Heart right ventricle (tissue), 16 donors: ENCODE measurements at regions of chr14 and their contacts with region 1.

Region 1: GRCh38 chr14:51448831-51449670 is 202.7 kb upstream of the FRMD6 start:
- DNase-seq: peak in 1 of 2 donors; percentile 57
- ATAC-seq: peak; percentile 79 to 98 (median 88)
- H3K4me3 ChIP-seq: no peak overlapping the region
- H3K27ac ChIP-seq: peak overlapping the region in 1 of 10 donors; percentile 12
- H3K4me1 ChIP-seq: peaks cover 5 to 25% (median 12%) of the 10 kb centered on the region in 9 donors
- H3K27me3 ChIP-seq: no peaks in the 10 kb centered on the region
- CTCF ChIP-seq: no peak

Region 2: DNA sequence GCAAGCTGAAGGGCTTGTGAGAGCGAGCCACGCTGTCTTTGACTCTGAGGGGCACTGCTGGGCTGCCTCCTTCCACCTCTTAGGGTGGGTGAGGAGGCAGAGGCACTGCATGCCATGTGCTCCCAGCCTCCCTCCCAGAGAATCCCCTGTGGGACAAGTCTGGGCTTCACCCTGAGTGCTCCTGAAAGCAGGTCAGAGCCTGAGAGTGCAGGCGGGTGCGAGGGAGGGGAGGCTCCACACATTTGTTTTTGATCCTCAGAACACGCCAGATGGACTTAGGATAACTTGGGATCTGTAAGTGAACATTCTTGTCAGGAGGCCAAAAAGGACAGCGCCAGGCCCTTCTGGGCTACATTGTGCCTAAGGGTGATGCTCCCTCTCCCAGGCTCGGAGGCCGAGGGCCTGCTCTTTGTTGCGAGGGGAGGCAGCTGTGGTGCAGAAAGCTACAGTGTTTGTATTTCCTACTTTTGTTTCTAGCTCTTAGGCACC is 53.6 kb before region 1 on chr14:
- intact Hi-C with region 1: loop called in 1 of 10 experiments (anchors 5 kb)
- DNase-seq: peak; percentile 42 to 44
- ATAC-seq: peak; percentile 53 to 80 (median 68)
- H3K4me3 ChIP-seq: no peak overlapping the region
- H3K27ac ChIP-seq: peak overlapping the region; percentile 53 to 91 (median 78)
- H3K4me1 ChIP-seq: peaks cover 8 to 44% (median 32%) of the 10 kb centered on the region in 9 donors
- H3K27me3 ChIP-seq: no peaks in the 10 kb centered on the region
- CTCF ChIP-seq: no peak

Region 3: DNA sequence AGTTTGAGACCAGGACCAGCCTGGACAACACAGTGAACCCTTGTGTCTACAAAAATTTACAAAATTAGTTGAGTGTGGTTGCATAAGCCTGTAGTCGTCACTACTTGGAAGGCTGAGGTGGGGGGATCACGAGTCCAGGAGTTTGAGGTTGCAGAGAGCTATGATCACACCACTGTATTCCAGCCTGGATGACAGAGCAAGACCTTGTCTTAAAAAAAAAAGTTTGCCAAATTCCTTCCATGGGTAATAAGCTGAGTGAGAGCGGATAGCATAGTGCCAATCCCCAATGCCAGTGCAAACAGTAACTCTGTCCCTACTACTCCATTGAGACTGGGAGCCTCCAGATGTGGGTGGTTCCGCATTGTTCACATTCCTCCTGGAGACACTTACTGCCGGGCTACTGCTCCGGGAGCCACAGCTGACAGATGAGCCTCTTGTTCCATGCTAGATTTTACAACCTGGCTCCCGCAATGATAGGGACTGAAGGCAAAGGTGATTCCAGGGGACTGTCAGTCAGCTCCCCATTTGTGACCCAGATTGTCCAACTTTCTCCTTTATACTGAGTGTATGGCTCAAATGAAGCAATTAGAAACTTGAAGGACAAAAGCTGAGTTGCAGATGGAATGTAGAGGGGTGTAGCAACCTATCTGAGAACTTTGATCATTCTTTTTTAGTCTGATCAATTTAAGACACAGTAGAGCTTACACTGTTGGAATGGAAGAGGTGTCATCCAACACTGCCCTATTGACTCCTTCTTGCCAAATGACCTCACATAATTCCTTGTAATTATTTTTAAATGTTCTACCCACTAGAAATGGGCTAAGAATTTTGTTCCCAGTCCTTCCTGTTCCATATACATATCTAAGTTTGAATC is 189.3 kb after region 1 on chr14:
- intact Hi-C with region 1: no loop called
- DNase-seq: no peak
- ATAC-seq: peak in 7 of 8 donors; percentile 34 to 91 (median 58)
- H3K4me3 ChIP-seq: no peak overlapping the region
- H3K27ac ChIP-seq: peak overlapping the region in 1 of 10 donors; percentile 13
- H3K4me1 ChIP-seq: peaks cover 0 to 14% (median 0%) of the 10 kb centered on the region in 9 donors
- H3K27me3 ChIP-seq: no peaks in the 10 kb centered on the region
- CTCF ChIP-seq: no peak